HepG2 (cell line): ENCODE measurements at regions of chr11 and their contacts with region 1.

Region 1: DNA sequence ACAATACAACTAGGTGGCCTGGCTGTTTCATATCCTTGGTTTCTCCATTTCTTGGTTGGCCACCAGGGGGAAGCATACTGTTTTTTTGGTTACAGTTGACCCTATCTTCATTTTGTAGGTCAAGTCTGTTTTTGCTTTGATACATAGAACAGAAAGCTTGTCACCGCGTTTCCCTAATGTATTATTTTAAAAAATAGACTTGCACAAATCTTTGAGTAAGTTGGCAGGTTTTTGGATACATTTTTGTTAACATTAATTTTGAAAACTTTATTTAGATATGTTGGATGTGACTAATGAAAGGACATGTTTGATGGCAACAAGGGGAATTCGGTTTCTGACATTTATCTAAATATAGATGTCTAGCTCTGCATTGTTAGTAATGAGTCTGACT is 3.0 kb downstream of the NCR3LG1 start:
- DNase-seq: peak; percentile 76
- ATAC-seq: no peak
- H3K4me3 ChIP-seq: peak overlapping the region in 2 of 3 experiments; percentile 73 to 76; a peak in 2 of 6 replicates
- H3K27ac ChIP-seq: no peak overlapping the region
- H3K4me1 ChIP-seq: peaks cover 49% of the 10 kb centered on the region
- H3K27me3 ChIP-seq: peaks cover 0 to 4% of the 10 kb centered on the region in 2 experiments; a peak in 2 of 5 replicates
- CTCF ChIP-seq: peak; percentile 63
- EP300 ChIP-seq: no peak; a peak in 1 of 4 replicates
- POLR2A ChIP-seq: no peak
- RAD21 ChIP-seq: no peak

Region 2: DNA sequence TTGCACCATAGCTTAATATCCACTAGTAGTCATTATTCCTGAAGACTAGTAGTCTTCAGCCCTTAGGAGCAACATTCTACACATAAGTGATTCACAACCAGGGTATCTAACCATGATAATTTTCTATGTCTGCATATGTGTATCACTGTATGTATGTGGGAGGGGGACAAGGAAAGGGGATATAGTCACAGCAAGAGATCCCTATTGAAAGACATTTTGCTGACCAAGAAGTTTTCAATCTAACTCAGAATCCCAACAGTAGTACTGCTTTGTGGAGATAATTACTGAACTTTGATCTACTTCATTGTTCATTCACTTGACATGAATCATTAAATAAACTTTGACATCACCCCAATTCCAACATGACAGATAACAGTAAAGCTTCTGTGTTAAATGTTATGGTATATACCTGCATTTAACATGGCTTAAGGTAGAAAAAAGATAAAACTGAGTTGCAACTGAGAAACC is 157.1 kb before region 1 on chr11:
- CTCF ChIA-PET with region 1: no interaction called
- POLR2A ChIA-PET with region 1: no interaction called
- in situ Hi-C with region 1: loop called (anchors 10 kb)
- intact Hi-C with region 1: loop called (anchors 2 kb)
- DNase-seq: peak; percentile 93
- ATAC-seq: peak; percentile 96
- H3K4me3 ChIP-seq: peak overlapping the region in 1 of 3 experiments; percentile 33; a peak in 1 of 6 replicates
- H3K27ac ChIP-seq: peak overlapping the region; percentile 72
- H3K4me1 ChIP-seq: peaks cover 40% of the 10 kb centered on the region
- H3K27me3 ChIP-seq: no peaks in the 10 kb centered on the region
- CTCF ChIP-seq: no peak
- EP300 ChIP-seq: peak in 1 of 2 experiments; percentile 56; a peak in 1 of 4 replicates
- POLR2A ChIP-seq: no peak
- RAD21 ChIP-seq: no peak

Region 3: GRCh38 chr11:17207317-17208258 is 147.0 kb before region 1 on chr11 and contains the start of gene PIK3C2A:
- CTCF ChIA-PET with region 1: no interaction called
- POLR2A ChIA-PET with region 1: interaction called, 13 read pairs
- in situ Hi-C with region 1: loop called (anchors 10 kb)
- intact Hi-C with region 1: loop called (anchors 2 kb)
- DNase-seq: peak; percentile 92
- ATAC-seq: peak; percentile 94
- H3K4me3 ChIP-seq: peak within 1 kb of the TSS; percentile 89 to 92 (median 91)
- H3K27ac ChIP-seq: peak within 1 kb of the TSS; percentile 99
- H3K4me1 ChIP-seq: peaks cover 52% of the 10 kb centered on the region
- H3K27me3 ChIP-seq: no peaks in the 10 kb centered on the region; a peak in 1 of 5 replicates
- CTCF ChIP-seq: no peak
- EP300 ChIP-seq: no peak
- POLR2A ChIP-seq: peak; percentile 98
- RAD21 ChIP-seq: no peak
- total RNA-seq, gene PIK3C2A: 49.9 and 117 TPM in 2 replicates

Region 4: GRCh38 chr11:17219016-17219415 is 135.6 kb before region 1 on chr11:
- CTCF ChIA-PET with region 1: no interaction called
- POLR2A ChIA-PET with region 1: no interaction called
- in situ Hi-C with region 1: no loop called
- intact Hi-C with region 1: no loop called
- DNase-seq: no peak
- ATAC-seq: no peak
- H3K4me3 ChIP-seq: no peak overlapping the region
- H3K27ac ChIP-seq: no peak overlapping the region
- H3K4me1 ChIP-seq: no peaks in the 10 kb centered on the region
- H3K27me3 ChIP-seq: no peaks in the 10 kb centered on the region
- CTCF ChIP-seq: no peak
- EP300 ChIP-seq: no peak
- POLR2A ChIP-seq: no peak
- RAD21 ChIP-seq: no peak

Region 5: DNA sequence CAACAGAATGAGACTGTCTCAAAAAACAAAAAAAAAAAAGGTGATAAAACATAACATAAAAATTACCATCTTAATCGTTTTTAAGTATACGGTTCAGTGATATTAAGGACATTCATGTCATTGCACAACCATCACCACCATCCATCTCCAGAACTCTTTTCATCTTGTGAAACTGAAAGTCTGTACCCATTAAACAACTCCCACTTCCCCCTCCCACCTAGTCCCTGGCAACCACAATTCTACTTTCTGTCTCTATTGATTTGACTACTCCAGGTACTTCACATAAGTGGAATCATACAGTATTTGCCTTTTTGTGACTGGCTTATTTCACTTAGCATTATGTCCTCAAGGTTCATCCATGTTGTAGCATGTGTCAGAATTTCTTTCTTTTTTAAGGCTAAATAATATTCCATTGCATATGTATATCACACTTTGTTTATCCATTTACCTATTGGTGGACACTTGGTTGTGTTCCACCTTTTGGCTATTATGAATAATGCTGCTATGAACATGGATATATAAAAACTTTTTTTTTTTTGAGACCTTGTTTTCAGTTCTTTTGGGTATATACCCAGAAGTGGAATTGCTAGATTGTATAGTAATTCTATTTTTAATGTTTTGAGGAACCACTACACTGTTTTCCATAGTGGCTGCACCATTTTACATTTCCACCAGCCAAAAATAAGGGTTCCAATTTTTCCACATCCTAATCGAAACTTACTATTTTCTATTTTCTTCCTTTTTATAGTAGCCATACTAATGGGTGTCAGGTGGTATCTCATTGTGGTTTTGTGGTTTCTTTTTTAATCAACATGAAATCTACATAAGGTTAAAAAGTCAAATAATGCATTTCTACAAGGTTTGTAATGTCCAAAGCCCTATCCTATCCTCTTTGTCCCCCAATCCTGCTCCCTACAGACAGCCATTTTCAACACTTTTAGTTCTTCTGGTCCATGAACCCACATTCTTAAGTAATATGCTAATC is 123.4 kb before region 1 on chr11:
- CTCF ChIA-PET with region 1: interaction called, 3 read pairs
- POLR2A ChIA-PET with region 1: no interaction called
- in situ Hi-C with region 1: no loop called
- intact Hi-C with region 1: loop called (anchors 1 kb)
- DNase-seq: no peak
- ATAC-seq: no peak
- H3K4me3 ChIP-seq: no peak overlapping the region
- H3K27ac ChIP-seq: no peak overlapping the region
- H3K4me1 ChIP-seq: 0 out of 2 replicates have a peak, but pooled peaks cover 5% of the 10 kb centered on the region
- H3K27me3 ChIP-seq: no peaks in the 10 kb centered on the region
- CTCF ChIP-seq: no peak
- EP300 ChIP-seq: no peak
- POLR2A ChIP-seq: no peak
- RAD21 ChIP-seq: no peak

Region 6: GRCh38 chr11:17276236-17277023 is 78.2 kb before region 1 on chr11 and contains the start of gene NUCB2:
- CTCF ChIA-PET with region 1: no interaction called
- POLR2A ChIA-PET with region 1: interaction called, 13 read pairs
- in situ Hi-C with region 1: no loop called
- intact Hi-C with region 1: loop called (anchors 2 kb)
- DNase-seq: peak; percentile 91
- ATAC-seq: peak; percentile 95
- H3K4me3 ChIP-seq: peak within 1 kb of the TSS; percentile 83 to 95 (median 87)
- H3K27ac ChIP-seq: peak within 1 kb of the TSS; percentile 87
- H3K4me1 ChIP-seq: peaks cover 47% of the 10 kb centered on the region
- H3K27me3 ChIP-seq: no peaks in the 10 kb centered on the region; a peak in 1 of 5 replicates
- CTCF ChIP-seq: peak; percentile 19; the same call in 1 of the 2 replicates
- EP300 ChIP-seq: no peak
- POLR2A ChIP-seq: peak; percentile 87 to 88
- RAD21 ChIP-seq: no peak
- total RNA-seq, gene NUCB2: 51.7 and 82.4 TPM in 2 replicates

Region 7: GRCh38 chr11:17504330-17505107 is 149.9 kb after region 1 on chr11:
- CTCF ChIA-PET with region 1: interaction called, 3 read pairs
- POLR2A ChIA-PET with region 1: no interaction called
- in situ Hi-C with region 1: no loop called
- intact Hi-C with region 1: loop called (anchors 1 kb)
- DNase-seq: peak; percentile 45
- ATAC-seq: peak; percentile 83
- H3K4me3 ChIP-seq: no peak overlapping the region
- H3K27ac ChIP-seq: no peak overlapping the region
- H3K4me1 ChIP-seq: no peaks in the 10 kb centered on the region
- H3K27me3 ChIP-seq: peaks cover 1 to 8% of the 10 kb centered on the region in 2 experiments; a peak in 2 of 5 replicates
- CTCF ChIP-seq: peak; percentile 87
- EP300 ChIP-seq: no peak
- POLR2A ChIP-seq: no peak
- RAD21 ChIP-seq: peak; percentile 76